ENCODE measurements at regions of chr2 and their contacts with region 1.

Region 1: GRCh38 chr2:120174963-120175581 is 48.1 kb downstream of the TMEM185B start:
- DNase-seq: no peak
- ATAC-seq: peak; percentile 52

Region 2: GRCh38 chr2:119702918-119703401 is 472.1 kb before region 1 on chr2:
- intact Hi-C with region 1: loop called in 1 of 2 experiments (anchors 10 kb)
- DNase-seq: peak; percentile 44 to 67
- ATAC-seq: peak; percentile 97

Region 3: GRCh38 chr2:119730671-119731193 is 444.3 kb before region 1 on chr2:
- intact Hi-C with region 1: no loop called
- DNase-seq: no peak
- ATAC-seq: no peak

Measured in left colon (tissue), 2 donors.